ENCODE measurements at regions of chr22 and their contacts with region 1.

Region 1: GRCh38 chr22:40443732-40444131 is 73.3 kb downstream of the SGSM3 start:
- DNase-seq: peak in 1 of 5 donors; percentile 45
- ATAC-seq: peak; percentile 35 to 89 (median 64)
- H3K4me3 ChIP-seq: no peak overlapping the region
- H3K27ac ChIP-seq: peak overlapping the region in 1 of 12 donors; percentile 66
- H3K4me1 ChIP-seq: peaks cover 0 to 89% (median 13%) of the 10 kb centered on the region in 12 donors
- H3K27me3 ChIP-seq: no peaks in the 10 kb centered on the region
- CTCF ChIP-seq: no peak
- POLR2A ChIP-seq: no peak

Region 2: DNA sequence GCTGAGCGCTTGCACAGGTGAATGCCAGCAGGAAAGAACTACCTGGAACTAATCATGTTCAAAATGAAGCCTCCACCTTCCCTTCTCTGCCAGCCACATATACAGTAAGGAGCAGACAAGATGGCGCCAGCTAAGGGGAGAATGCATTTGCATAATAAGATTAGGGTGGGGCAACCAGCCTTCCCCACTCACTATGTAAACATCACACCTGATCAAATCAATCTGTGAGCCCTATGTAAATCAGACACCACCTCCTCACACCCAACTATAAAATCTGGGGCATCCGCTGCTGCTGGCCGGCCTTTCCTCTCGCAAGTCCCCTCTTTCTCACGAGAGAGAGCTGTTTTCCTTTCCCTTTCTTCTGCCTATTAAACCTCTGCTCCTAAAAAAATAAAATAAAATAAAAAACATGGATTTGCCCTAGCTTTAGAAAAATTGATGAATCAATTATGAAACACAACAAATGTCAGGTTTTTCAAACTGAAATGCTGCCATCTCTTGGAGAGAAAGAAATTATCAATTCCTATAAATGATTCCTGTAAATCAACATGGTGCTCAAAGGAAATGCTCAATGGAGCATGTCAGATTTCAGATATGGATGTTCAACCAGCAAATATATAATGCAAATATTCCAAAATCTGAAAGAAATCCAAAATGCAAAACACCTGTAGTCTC is 35.5 kb after region 1 on chr22:
- intact Hi-C with region 1: loop called in 2 of 10 experiments (anchors 5 to 10 kb)
- DNase-seq: no peak
- ATAC-seq: no peak
- H3K4me3 ChIP-seq: no peak overlapping the region
- H3K27ac ChIP-seq: no peak overlapping the region
- H3K4me1 ChIP-seq: peaks cover 0 to 46% (median 16%) of the 10 kb centered on the region in 12 donors
- H3K27me3 ChIP-seq: no peaks in the 10 kb centered on the region
- CTCF ChIP-seq: peak in 1 of 12 donors; percentile 7
- POLR2A ChIP-seq: no peak

Region 3: DNA sequence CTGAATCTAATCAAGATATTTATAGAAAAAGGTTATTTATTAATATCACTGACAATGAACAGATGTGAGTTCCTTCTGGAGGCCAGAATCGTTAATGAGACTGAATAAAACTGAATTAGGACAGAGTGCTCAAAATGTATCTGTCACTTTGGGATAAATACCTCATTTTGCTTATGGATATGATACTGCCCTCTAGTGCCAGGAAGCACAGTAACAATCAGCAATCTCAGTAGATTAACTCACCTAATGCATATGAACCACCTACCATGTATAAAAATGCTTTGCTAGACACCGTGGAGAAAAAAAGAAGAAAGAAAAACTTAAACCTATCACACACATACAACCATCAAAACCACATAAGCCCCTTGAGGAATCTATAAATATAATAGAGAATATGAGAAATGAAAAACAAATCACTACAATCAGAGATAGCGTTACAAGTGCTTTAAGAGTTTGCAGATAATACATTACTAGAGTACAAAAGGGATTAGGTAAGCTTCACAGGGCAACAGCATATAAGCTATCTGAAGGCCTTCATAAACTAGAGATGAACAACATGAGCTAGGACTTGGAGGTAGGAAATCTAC is 44.0 kb after region 1 on chr22:
- intact Hi-C with region 1: loop called in 8 of 10 experiments (anchors 2 to 10 kb)
- DNase-seq: no peak
- ATAC-seq: no peak
- H3K4me3 ChIP-seq: no peak overlapping the region
- H3K27ac ChIP-seq: no peak overlapping the region
- H3K4me1 ChIP-seq: peaks cover 0 to 62% (median 40%) of the 10 kb centered on the region in 12 donors
- H3K27me3 ChIP-seq: no peaks in the 10 kb centered on the region
- CTCF ChIP-seq: peak; percentile 37 to 77 (median 62)
- POLR2A ChIP-seq: no peak

Region 4: DNA sequence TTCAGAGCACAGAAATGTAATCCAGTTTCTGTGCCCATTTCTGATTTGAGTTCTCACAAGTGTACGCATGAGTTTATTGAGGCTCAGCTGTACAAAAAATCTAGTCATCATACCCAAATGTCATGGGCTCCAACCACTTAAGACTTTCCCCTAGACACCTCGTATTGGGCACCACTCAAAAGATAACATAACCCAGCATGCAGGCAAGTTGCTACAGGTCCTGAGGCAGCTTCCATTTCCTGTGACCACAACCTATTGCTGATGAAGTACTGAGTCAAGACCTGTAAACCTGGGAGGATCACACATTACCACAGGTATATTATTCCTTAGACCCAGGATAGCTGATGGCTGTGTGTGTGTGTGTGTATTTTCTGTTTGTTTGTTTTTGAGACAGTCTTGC is 97.6 kb after region 1 on chr22:
- intact Hi-C with region 1: no loop called
- DNase-seq: no peak
- ATAC-seq: no peak
- H3K4me3 ChIP-seq: no peak overlapping the region
- H3K27ac ChIP-seq: no peak overlapping the region
- H3K4me1 ChIP-seq: peaks cover 0 to 30% (median 2%) of the 10 kb centered on the region in 12 donors
- H3K27me3 ChIP-seq: no peaks in the 10 kb centered on the region
- CTCF ChIP-seq: no peak
- POLR2A ChIP-seq: no peak

Region 5: DNA sequence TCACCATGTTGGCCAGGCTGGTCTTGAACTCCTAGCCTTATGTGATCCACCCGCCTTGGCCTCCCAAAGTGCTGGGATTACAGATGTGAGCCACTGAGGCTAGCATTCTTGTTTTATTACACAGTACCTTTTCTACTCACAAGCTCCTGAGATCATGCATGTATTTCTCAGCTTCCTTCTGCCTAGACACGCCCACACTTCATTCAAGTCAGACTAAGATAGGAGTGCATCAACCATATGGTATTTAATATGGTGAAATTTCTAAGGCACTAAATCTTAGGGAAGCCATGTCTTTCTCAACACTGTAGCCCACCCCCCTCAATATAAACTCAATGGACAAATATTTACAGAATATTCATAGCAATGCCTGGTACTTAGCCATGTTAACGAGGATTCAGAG is 313.3 kb after region 1 on chr22:
- intact Hi-C with region 1: loop called in 3 of 10 experiments (anchors 5 to 10 kb)
- DNase-seq: no peak
- ATAC-seq: no peak
- H3K4me3 ChIP-seq: no peak overlapping the region
- H3K27ac ChIP-seq: no peak overlapping the region
- H3K4me1 ChIP-seq: peaks cover 0 to under 1% (median 0%) of the 10 kb centered on the region in 12 donors
- H3K27me3 ChIP-seq: no peaks in the 10 kb centered on the region
- CTCF ChIP-seq: no peak
- POLR2A ChIP-seq: no peak

Measured in heart left ventricle (tissue), 16 donors.